A549 (cell line): ENCODE measurements at regions of chr1 and their contacts with region 1.

Region 1: DNA sequence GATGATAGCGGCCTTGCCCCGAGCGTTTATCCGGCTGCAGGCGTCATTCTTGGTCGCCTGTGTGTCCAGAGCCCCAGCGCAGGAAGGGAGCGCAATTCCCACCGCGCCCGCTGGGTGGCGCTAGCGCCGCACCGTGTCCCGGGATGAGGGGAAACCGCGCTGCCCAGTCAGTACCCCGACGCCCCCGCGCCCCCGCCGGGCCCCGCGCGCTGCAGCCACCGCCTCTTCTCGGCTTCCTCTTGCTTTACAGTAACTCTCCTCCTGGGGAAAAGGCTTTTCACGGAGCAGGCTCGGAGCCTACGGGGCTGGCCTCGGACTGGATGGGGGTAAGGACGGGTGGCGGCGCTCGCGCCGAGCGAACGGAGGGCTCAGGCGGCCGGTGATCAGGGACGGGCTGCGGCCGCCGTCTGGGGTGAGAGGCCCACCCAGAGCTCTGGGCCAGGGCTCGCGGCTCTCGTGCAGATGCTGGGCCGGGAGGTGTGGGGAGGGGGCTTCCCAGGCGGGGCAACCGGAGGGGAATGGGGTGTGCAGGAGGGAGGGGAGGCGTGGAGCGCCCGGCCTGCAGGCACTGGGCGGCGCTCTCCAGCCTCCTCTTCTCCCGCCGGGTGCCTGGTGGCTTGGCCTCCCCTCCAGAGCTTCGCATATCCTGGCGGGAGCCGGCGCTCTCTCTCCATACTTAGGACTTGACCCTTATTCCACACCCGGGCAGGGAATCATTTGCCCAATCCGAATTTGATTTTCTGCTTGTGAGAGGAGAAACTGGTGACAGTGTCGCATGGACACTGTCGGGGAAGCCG is 29.8 kb downstream of the TEX35 start:
- DNase-seq: peak; percentile 78 to 86
- ATAC-seq: peak; percentile 88 to 91
- H3K4me3 ChIP-seq: peak overlapping the region; percentile 77
- H3K27ac ChIP-seq: peak overlapping the region; percentile 94 to 98
- H3K4me1 ChIP-seq: peaks cover 45% of the 10 kb centered on the region
- CTCF ChIP-seq: peak; percentile 97
- EP300 ChIP-seq: no peak
- POLR2A ChIP-seq: no peak
- RAD21 ChIP-seq: peak; percentile 80 to 95

Region 2: GRCh38 chr1:178434360-178434759 is 108.4 kb before region 1 on chr1:
- CTCF ChIA-PET with region 1: no interaction called
- POLR2A ChIA-PET with region 1: no interaction called
- DNase-seq: no peak
- ATAC-seq: no peak
- H3K4me3 ChIP-seq: no peak overlapping the region
- H3K27ac ChIP-seq: no peak overlapping the region
- H3K4me1 ChIP-seq: no peaks in the 10 kb centered on the region
- CTCF ChIP-seq: no peak
- EP300 ChIP-seq: no peak
- POLR2A ChIP-seq: no peak
- RAD21 ChIP-seq: no peak

Region 3: DNA sequence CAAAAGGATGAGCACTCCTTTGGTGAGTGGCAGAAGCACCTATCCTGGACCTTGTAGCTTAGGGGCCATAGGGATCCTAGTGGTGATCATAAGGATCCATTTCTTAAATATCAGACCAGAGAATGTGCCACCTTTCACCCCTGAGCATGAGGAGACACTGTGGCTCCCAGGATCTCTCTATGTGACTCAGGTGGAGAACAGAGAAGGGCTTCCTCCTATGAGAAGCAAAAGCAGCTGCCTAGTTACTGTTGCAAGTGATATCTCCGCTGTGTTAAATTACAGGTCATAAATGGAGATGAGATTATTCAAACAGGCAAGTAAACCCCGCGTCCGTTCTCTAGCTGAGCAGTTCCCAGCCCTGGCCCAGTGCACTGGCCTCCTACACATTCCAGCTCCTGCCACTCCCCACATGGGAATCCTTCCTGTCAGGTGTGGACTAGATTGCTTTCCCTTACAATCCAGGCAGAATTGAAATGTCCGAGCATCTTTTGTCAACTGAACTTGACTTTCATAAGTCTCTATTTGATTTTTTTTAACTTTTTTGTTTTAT is 72.3 kb before region 1 on chr1:
- CTCF ChIA-PET with region 1: no interaction called
- POLR2A ChIA-PET with region 1: no interaction called
- DNase-seq: peak in 1 of 2 experiments; percentile 20
- ATAC-seq: peak; percentile 64 to 65; a peak in 3 of 6 replicates
- H3K4me3 ChIP-seq: no peak overlapping the region
- H3K27ac ChIP-seq: no peak overlapping the region
- H3K4me1 ChIP-seq: no peaks in the 10 kb centered on the region
- CTCF ChIP-seq: no peak
- EP300 ChIP-seq: no peak
- POLR2A ChIP-seq: no peak
- RAD21 ChIP-seq: no peak

Region 4: GRCh38 chr1:178532392-178532791 is 10.4 kb before region 1 on chr1:
- CTCF ChIA-PET with region 1: interaction called, 70 read pairs
- POLR2A ChIA-PET with region 1: no interaction called
- DNase-seq: peak; percentile 80 to 94
- ATAC-seq: peak; percentile 71 to 90
- H3K4me3 ChIP-seq: no peak overlapping the region
- H3K27ac ChIP-seq: peak overlapping the region; percentile 27 to 68; a peak in 4 of 6 replicates
- H3K4me1 ChIP-seq: peaks cover 29% of the 10 kb centered on the region
- CTCF ChIP-seq: peak; percentile 92
- EP300 ChIP-seq: no peak
- POLR2A ChIP-seq: no peak
- RAD21 ChIP-seq: peak; percentile 92 to 96

Region 5: GRCh38 chr1:178725603-178726517 is 183.1 kb after region 1 on chr1:
- CTCF ChIA-PET with region 1: interaction called, 9 read pairs
- POLR2A ChIA-PET with region 1: interaction called, 12 read pairs
- DNase-seq: peak; percentile 79 to 95
- ATAC-seq: peak; percentile 85 to 91
- H3K4me3 ChIP-seq: peak overlapping the region; percentile 90
- H3K27ac ChIP-seq: peak overlapping the region; percentile 82 to 90
- H3K4me1 ChIP-seq: peaks cover 21% of the 10 kb centered on the region
- CTCF ChIP-seq: peak; percentile 44
- EP300 ChIP-seq: no peak
- POLR2A ChIP-seq: no peak
- RAD21 ChIP-seq: no peak

Region 6: GRCh38 chr1:178749581-178750166 is 206.9 kb after region 1 on chr1:
- CTCF ChIA-PET with region 1: interaction called, 15 read pairs
- POLR2A ChIA-PET with region 1: no interaction called
- DNase-seq: no peak
- ATAC-seq: no peak
- H3K4me3 ChIP-seq: no peak overlapping the region
- H3K27ac ChIP-seq: no peak overlapping the region
- H3K4me1 ChIP-seq: no peaks in the 10 kb centered on the region
- CTCF ChIP-seq: no peak
- EP300 ChIP-seq: no peak
- POLR2A ChIP-seq: no peak
- RAD21 ChIP-seq: no peak

Region 7: GRCh38 chr1:178774263-178774662 is 231.5 kb after region 1 on chr1:
- CTCF ChIA-PET with region 1: interaction called, 17 read pairs
- POLR2A ChIA-PET with region 1: no interaction called
- DNase-seq: peak in 1 of 2 experiments; percentile 21
- ATAC-seq: peak in 1 of 2 experiments; percentile 59; a peak in 2 of 6 replicates
- H3K4me3 ChIP-seq: no peak overlapping the region
- H3K27ac ChIP-seq: no peak overlapping the region
- H3K4me1 ChIP-seq: no peaks in the 10 kb centered on the region
- CTCF ChIP-seq: peak; percentile 51
- EP300 ChIP-seq: no peak
- POLR2A ChIP-seq: no peak
- RAD21 ChIP-seq: peak; percentile 67 to 80

Region 8: DNA sequence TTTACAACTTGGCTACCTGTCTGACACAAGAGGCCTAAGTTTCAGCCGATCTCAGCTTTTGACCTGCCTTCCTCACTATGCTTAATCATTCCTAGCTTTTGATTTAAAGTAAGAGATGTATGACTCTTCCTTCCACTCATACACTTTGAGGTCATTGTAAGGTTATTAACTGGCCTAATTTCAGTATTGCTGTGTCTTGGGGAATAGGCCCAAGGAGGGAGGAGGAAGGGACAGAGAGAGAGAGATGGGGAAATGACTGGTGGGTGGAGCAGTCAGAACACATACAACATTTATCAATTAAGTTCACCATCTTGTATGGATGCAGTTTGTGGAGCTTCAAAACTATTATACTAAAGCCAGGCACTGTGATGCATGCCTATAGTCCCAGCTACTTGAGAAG is 454.7 kb after region 1 on chr1:
- CTCF ChIA-PET with region 1: interaction called, 352 read pairs
- POLR2A ChIA-PET with region 1: interaction called, 7 read pairs
- DNase-seq: no peak
- ATAC-seq: no peak
- H3K4me3 ChIP-seq: no peak overlapping the region
- H3K27ac ChIP-seq: no peak overlapping the region
- H3K4me1 ChIP-seq: peaks cover 2% of the 10 kb centered on the region; the same call in 1 of the 3 replicates
- CTCF ChIP-seq: no peak
- EP300 ChIP-seq: no peak
- POLR2A ChIP-seq: no peak
- RAD21 ChIP-seq: no peak